ENCODE measurements at regions of chrX and their contacts with region 1.

Region 1: DNA sequence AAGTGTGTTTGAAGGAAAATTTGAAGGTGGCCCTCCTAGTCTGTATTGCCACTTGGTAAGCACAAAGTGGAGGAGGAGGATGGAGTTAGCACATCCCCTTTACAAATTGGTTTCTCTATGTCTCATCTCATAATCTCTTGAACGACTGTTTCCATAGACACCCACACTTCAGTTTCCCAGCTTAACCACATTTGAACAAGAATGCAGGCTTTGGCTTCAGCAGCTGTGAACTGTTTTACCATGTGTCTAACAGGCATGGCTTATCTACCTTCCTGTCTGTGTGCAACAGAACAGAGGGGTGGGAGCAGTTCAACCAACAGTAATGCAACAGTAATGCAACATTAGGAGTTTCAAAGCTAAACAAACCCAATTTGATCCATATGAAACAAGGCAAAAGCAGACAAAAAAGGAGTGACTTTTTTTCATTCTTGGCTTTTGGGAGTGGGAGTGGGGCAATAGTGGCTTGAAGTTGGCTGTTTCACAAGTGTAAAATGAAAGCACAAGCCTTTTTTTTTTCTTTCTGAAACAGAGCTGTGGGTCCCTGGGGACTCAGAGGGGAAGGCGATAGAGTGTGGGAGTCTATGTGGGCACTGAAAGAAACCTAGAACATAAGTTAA is 108.0 kb downstream of the ITM2A start:
- DNase-seq: peak; percentile 19 to 83
- ATAC-seq: peak; percentile 86 to 95 (median 95)
- H3K4me3 ChIP-seq: peak overlapping the region; percentile 19
- H3K4me3 Mint-ChIP-seq: peak overlapping the region; percentile 84
- H3K27ac ChIP-seq: peak overlapping the region; percentile 84
- H3K27ac Mint-ChIP-seq: peak overlapping the region; percentile 89 to 92
- H3K4me1 ChIP-seq: peaks cover 11% of the 10 kb centered on the region
- H3K4me1 Mint-ChIP-seq: peaks cover 56 to 63% of the 10 kb centered on the region in 2 donors
- H3K27me3 ChIP-seq: no peaks in the 10 kb centered on the region
- H3K27me3 Mint-ChIP-seq: peaks cover 0 to 16% of the 10 kb centered on the region in 2 donors
- CTCF ChIP-seq: no peak

Region 2: GRCh38 chrX:78653118-78653822 is 605.9 kb before region 1 on chrX:
- intact Hi-C with region 1: loop called (anchors 5 kb)
- DNase-seq: peak in 1 of 2 donors; percentile 9
- ATAC-seq: peak; percentile 30 to 49 (median 48)
- H3K4me3 ChIP-seq: no peak overlapping the region
- H3K4me3 Mint-ChIP-seq: no peak overlapping the region
- H3K27ac ChIP-seq: no peak overlapping the region
- H3K27ac Mint-ChIP-seq: no peak overlapping the region
- H3K4me1 ChIP-seq: peaks cover 9% of the 10 kb centered on the region
- H3K4me1 Mint-ChIP-seq: peaks cover 23 to 30% of the 10 kb centered on the region in 2 donors
- H3K27me3 ChIP-seq: no peaks in the 10 kb centered on the region
- H3K27me3 Mint-ChIP-seq: peaks cover 6 to 20% of the 10 kb centered on the region in 2 donors
- CTCF ChIP-seq: no peak

Region 3: DNA sequence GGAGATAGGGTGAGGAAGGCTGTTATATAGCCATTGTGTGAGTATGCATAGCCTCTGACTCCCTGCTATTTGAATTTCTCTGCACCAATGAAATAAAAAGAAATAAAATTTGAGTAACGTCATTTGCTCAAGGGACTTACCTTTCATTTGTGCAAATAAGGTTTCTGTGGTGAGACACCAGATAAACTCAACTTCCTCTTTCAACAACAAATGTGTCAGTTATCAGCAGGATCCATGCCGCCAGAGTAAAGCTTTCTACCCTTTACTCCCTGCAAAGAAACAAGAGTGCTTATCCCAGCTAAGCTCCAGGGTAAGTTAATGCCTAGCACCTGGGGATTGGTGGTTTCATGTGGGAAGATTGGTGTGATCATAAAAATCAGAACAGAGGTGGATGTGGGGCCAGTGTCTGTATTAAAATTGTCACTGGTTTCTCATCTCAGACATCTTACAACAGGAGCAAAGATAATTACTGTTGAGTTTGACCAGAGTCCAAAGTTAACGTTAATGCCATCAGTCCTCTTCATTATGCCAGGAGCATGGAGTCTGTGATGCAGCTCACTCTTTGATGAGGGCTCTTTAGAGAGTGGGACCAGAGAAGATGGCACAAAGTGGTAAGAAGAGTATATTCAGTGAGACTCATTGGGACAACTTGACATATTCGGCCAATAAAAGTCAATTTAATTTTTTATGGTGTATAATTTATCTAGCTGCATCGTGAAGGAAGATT is 313.8 kb before region 1 on chrX and contains the start of gene P2RY10:
- intact Hi-C with region 1: loop called (anchors 1 kb)
- DNase-seq: peak in 1 of 2 donors; percentile 81
- ATAC-seq: peak; percentile 80 to 84 (median 83)
- H3K4me3 ChIP-seq: peak within 1 kb of the TSS; percentile 71
- H3K4me3 Mint-ChIP-seq: peak within 1 kb of the TSS; percentile 88
- H3K27ac ChIP-seq: peak within 1 kb of the TSS; percentile 80
- H3K27ac Mint-ChIP-seq: peak within 1 kb of the TSS; percentile 90 to 93
- H3K4me1 ChIP-seq: peaks cover 4% of the 10 kb centered on the region
- H3K4me1 Mint-ChIP-seq: peaks cover 45 to 52% of the 10 kb centered on the region in 2 donors
- H3K27me3 ChIP-seq: no peaks in the 10 kb centered on the region
- H3K27me3 Mint-ChIP-seq: peaks cover 4 to 18% of the 10 kb centered on the region in 2 donors
- CTCF ChIP-seq: no peak
- total RNA-seq, gene P2RY10: 17.4 to 21.5 (median 19.7) TPM

Region 4: GRCh38 chrX:79107891-79108718 is 151.1 kb before region 1 on chrX:
- intact Hi-C with region 1: loop called (anchors 10 kb)
- DNase-seq: peak in 1 of 2 donors; percentile 78
- ATAC-seq: peak; percentile 89 to 94 (median 92)
- H3K4me3 ChIP-seq: no peak overlapping the region
- H3K4me3 Mint-ChIP-seq: peak overlapping the region; percentile 62
- H3K27ac ChIP-seq: peak overlapping the region; percentile 100
- H3K27ac Mint-ChIP-seq: peak overlapping the region; percentile 88 to 96
- H3K4me1 ChIP-seq: peaks cover 5% of the 10 kb centered on the region
- H3K4me1 Mint-ChIP-seq: peaks cover 29 to 36% of the 10 kb centered on the region in 2 donors
- H3K27me3 ChIP-seq: no peaks in the 10 kb centered on the region
- H3K27me3 Mint-ChIP-seq: peaks cover 0 to 8% of the 10 kb centered on the region in 2 donors
- CTCF ChIP-seq: no peak

Region 5: DNA sequence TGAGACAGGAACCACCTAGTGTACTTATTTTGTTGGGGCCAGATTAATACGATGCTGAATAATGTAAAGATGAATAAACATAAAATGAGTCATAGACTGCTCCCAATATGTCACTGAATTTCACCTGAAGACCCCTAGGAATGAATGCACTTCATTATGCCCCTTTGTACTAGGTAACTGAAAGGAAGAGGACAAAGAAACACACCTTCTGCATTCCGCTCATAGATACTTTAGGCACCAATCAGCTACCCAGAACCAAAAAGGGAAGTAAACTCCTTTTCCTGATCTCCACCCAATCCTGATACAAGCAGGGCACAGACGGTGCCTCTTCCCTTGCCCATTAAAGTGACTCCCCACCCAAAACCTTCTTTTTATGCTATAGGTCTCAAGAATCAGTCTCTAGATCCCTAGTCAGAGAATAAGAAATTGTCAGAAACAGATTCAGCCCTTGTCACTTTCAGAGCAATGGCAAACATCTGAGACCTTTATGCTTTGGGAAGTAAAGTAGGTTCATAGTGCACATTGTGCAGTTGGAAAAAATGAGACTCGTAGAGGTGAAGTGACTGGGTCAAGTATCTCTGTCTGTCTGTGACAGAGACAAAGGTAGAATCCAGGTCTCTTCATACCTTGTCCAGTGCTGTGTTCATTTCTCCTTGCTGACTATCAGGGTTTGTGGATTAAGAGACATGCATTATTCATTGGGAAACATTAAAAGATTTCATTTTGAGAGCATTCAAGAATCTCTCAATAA is 112.4 kb before region 1 on chrX:
- intact Hi-C with region 1: loop called (anchors 5 kb)
- DNase-seq: peak in 1 of 2 donors; percentile 54
- ATAC-seq: peak; percentile 11 to 38 (median 20)
- H3K4me3 ChIP-seq: peak overlapping the region; percentile 86
- H3K4me3 Mint-ChIP-seq: peak overlapping the region; percentile 100
- H3K27ac ChIP-seq: peak overlapping the region; percentile 55
- H3K27ac Mint-ChIP-seq: peak overlapping the region; percentile 90 to 99
- H3K4me1 ChIP-seq: peaks cover 20% of the 10 kb centered on the region
- H3K4me1 Mint-ChIP-seq: peaks cover 44 to 60% of the 10 kb centered on the region in 2 donors
- H3K27me3 ChIP-seq: no peaks in the 10 kb centered on the region
- H3K27me3 Mint-ChIP-seq: no peaks in the 10 kb centered on the region
- CTCF ChIP-seq: no peak

Region 6: GRCh38 chrX:79161655-79162054 is 97.5 kb before region 1 on chrX:
- intact Hi-C with region 1: loop called (anchors 5 kb)
- DNase-seq: peak; percentile 23 to 86
- ATAC-seq: peak; percentile 87 to 99 (median 96)
- H3K4me3 ChIP-seq: peak overlapping the region; percentile 30
- H3K4me3 Mint-ChIP-seq: peak overlapping the region; percentile 90
- H3K27ac ChIP-seq: peak overlapping the region; percentile 91
- H3K27ac Mint-ChIP-seq: peak overlapping the region; percentile 93 to 96
- H3K4me1 ChIP-seq: peaks cover 14% of the 10 kb centered on the region
- H3K4me1 Mint-ChIP-seq: peaks cover 52 to 61% of the 10 kb centered on the region in 2 donors
- H3K27me3 ChIP-seq: no peaks in the 10 kb centered on the region
- H3K27me3 Mint-ChIP-seq: no peaks in the 10 kb centered on the region
- CTCF ChIP-seq: no peak

Region 7: DNA sequence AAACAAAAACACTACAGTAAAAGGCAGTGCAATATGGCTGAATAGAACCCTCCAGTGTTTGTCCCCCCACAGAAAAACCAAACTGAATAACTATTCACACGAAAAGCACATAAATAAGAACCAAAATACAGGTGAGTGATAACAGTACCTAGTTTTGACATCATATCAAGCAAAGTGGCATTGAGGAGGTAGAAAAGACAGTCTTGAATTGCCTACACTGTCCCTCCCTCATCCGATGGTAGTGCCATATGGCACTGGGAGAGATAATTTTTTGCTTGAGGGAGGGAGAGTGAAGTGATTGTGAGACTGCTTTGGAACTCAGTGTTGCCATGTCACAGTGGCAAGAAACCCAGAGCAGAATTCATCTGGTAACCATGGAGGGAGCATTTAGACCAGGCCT is 15.5 kb before region 1 on chrX:
- intact Hi-C with region 1: no loop called
- DNase-seq: no peak
- ATAC-seq: no peak
- H3K4me3 ChIP-seq: no peak overlapping the region
- H3K4me3 Mint-ChIP-seq: no peak overlapping the region
- H3K27ac ChIP-seq: no peak overlapping the region
- H3K27ac Mint-ChIP-seq: no peak overlapping the region
- H3K4me1 ChIP-seq: no peaks in the 10 kb centered on the region
- H3K4me1 Mint-ChIP-seq: peaks cover 22 to 28% of the 10 kb centered on the region in 2 donors
- H3K27me3 ChIP-seq: no peaks in the 10 kb centered on the region
- H3K27me3 Mint-ChIP-seq: peaks cover 0 to 10% of the 10 kb centered on the region in 2 donors
- CTCF ChIP-seq: no peak

Region 8: GRCh38 chrX:79412972-79413371 is 153.8 kb after region 1 on chrX:
- intact Hi-C with region 1: loop called (anchors 5 kb)
- DNase-seq: peak in 1 of 2 donors; percentile 66
- ATAC-seq: no peak
- H3K4me3 ChIP-seq: peak overlapping the region; percentile 10
- H3K4me3 Mint-ChIP-seq: peak overlapping the region; percentile 70
- H3K27ac ChIP-seq: no peak overlapping the region
- H3K27ac Mint-ChIP-seq: no peak overlapping the region
- H3K4me1 ChIP-seq: no peaks in the 10 kb centered on the region
- H3K4me1 Mint-ChIP-seq: peaks cover 23% of the 10 kb centered on the region in 2 donors
- H3K27me3 ChIP-seq: no peaks in the 10 kb centered on the region
- H3K27me3 Mint-ChIP-seq: peaks cover 0 to 19% of the 10 kb centered on the region in 2 donors
- CTCF ChIP-seq: peak; percentile 51

Region 9: GRCh38 chrX:80523643-80524042 is 1264.5 kb after region 1 on chrX:
- intact Hi-C with region 1: no loop called
- DNase-seq: no peak
- ATAC-seq: no peak
- H3K4me3 ChIP-seq: no peak overlapping the region
- H3K4me3 Mint-ChIP-seq: no peak overlapping the region
- H3K27ac ChIP-seq: no peak overlapping the region
- H3K27ac Mint-ChIP-seq: no peak overlapping the region
- H3K4me1 ChIP-seq: no peaks in the 10 kb centered on the region
- H3K4me1 Mint-ChIP-seq: no peaks in the 10 kb centered on the region
- H3K27me3 ChIP-seq: no peaks in the 10 kb centered on the region
- H3K27me3 Mint-ChIP-seq: no peaks in the 10 kb centered on the region
- CTCF ChIP-seq: no peak

Measured in natural killer cell (primary cell).